ENCODE measurements at regions of chr12 and their contacts with region 1.

Region 1: GRCh38 chr12:114499338-114499737 is 93.4 kb upstream of the TBX5 start:
- DNase-seq: no peak
- ATAC-seq: no peak
- H3K4me3 ChIP-seq: no peak overlapping the region
- H3K4me3 Mint-ChIP-seq: no peak overlapping the region
- H3K27ac ChIP-seq: no peak overlapping the region
- H3K27ac Mint-ChIP-seq: no peak overlapping the region
- H3K4me1 ChIP-seq: no peaks in the 10 kb centered on the region
- H3K4me1 Mint-ChIP-seq: no peaks in the 10 kb centered on the region
- H3K27me3 ChIP-seq: peaks cover 3 to 10% of the 10 kb centered on the region in 2 experiments
- H3K27me3 Mint-ChIP-seq: peaks cover 42% of the 10 kb centered on the region in 2 donors

Region 2: GRCh38 chr12:115866909-115867525 is 1367.7 kb after region 1 on chr12:
- CTCF ChIA-PET with region 1: no interaction called
- POLR2A ChIA-PET with region 1: interaction called in 1 of 2 experiments, 12 read pairs
- DNase-seq: peak in 1 of 35 experiments; percentile 2
- ATAC-seq: no peak
- H3K4me3 ChIP-seq: no peak overlapping the region
- H3K4me3 Mint-ChIP-seq: no peak overlapping the region
- H3K27ac ChIP-seq: no peak overlapping the region
- H3K27ac Mint-ChIP-seq: no peak overlapping the region
- H3K4me1 ChIP-seq: no peaks in the 10 kb centered on the region
- H3K4me1 Mint-ChIP-seq: no peaks in the 10 kb centered on the region
- H3K27me3 ChIP-seq: peaks cover 3 to 16% of the 10 kb centered on the region in 2 experiments
- H3K27me3 Mint-ChIP-seq: peaks cover 22 to 29% of the 10 kb centered on the region in 2 donors